Natural killer cell (primary cell): ENCODE measurements at regions of chr1 and their contacts with region 1.

Region 1: GRCh38 chr1:173997796-173998195 is 24.4 kb downstream of the RC3H1 start:
- DNase-seq: no peak
- ATAC-seq: no peak
- H3K4me3 ChIP-seq: no peak overlapping the region
- H3K4me3 Mint-ChIP-seq: no peak overlapping the region
- H3K27ac ChIP-seq: no peak overlapping the region
- H3K27ac Mint-ChIP-seq: peak overlapping the region in 1 of 2 donors; percentile 16
- H3K4me1 ChIP-seq: peaks cover 10% of the 10 kb centered on the region
- H3K4me1 Mint-ChIP-seq: peaks cover 46 to 67% of the 10 kb centered on the region in 2 donors
- H3K27me3 ChIP-seq: no peaks in the 10 kb centered on the region
- H3K27me3 Mint-ChIP-seq: no peaks in the 10 kb centered on the region
- CTCF ChIP-seq: no peak

Region 2: GRCh38 chr1:174074757-174075156 is 77.0 kb after region 1 on chr1:
- intact Hi-C with region 1: loop called (anchors 10 kb)
- DNase-seq: peak in 1 of 2 donors; percentile 22
- ATAC-seq: no peak
- H3K4me3 ChIP-seq: no peak overlapping the region
- H3K4me3 Mint-ChIP-seq: no peak overlapping the region
- H3K27ac ChIP-seq: no peak overlapping the region
- H3K27ac Mint-ChIP-seq: no peak overlapping the region
- H3K4me1 ChIP-seq: no peaks in the 10 kb centered on the region
- H3K4me1 Mint-ChIP-seq: no peaks in the 10 kb centered on the region
- H3K27me3 ChIP-seq: no peaks in the 10 kb centered on the region
- H3K27me3 Mint-ChIP-seq: peaks cover 0 to 7% of the 10 kb centered on the region in 2 donors
- CTCF ChIP-seq: peak; percentile 27